Right ventricle myocardium inferior (tissue), 1 donor: ENCODE measurements at regions of chr1 and their contacts with region 1.

Region 1: DNA sequence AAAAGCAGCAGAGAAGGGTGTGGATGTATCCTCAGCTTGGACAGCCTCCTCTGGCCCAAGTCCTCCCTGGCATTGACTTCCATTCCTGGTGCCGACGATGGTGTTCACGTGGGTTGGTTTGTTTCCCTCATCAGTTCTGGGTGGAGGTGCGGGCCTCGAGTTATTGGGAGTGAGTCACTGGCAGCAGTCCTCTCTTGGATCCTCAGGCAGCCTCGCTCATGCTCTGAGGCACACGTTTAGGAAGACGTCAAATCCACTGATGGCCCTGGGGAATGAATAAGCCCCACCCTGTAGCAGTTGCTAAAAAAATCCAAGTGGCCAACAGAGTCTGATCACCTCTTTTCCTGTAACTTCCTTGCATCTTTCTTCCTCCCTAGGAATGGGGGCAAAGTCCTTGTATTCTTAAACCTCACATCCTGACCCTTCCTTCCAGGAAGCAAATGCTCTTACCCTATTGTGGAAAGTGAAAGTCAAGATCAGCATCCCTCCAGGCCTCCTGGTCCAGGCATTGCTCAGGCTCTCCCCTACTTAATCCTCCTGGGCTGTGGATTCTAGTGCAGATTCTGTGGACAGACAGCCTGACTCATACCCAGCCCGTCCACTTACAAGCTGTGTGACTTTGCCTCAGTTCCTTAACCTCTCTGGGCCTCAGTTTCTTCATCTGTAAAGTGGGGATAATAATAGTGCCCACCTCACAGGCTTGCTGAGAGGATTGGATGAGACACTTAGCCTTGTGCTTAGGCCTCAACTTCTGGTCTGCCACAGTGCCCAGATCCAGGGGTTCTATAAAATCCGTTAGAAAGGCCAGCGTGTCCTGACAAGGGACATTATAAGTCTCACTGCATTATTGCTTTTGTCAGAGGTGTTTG is 111.1 kb downstream of the TLR5 start:
- DNase-seq: no peak
- ATAC-seq: peak; percentile 93

Region 2: DNA sequence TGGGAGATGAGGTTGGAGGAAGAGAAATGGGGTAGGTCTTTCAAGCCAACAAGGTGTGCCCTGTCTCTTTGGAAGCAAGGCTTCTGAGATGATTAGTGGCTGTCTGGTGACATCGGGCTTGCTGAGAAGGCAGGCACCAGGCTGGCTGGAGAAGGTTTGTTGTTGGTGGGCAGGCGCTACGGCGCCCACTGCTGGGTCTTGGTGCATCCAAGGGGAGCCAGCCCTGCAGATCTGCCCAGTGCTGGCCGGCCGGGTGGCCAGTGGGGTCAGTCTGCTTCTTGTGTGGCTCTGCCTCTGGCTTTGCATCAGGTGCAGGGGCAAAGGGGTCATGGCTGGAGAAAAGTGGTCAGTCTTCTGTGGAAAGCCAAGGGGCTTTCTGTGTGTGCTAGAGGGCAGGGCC is 15.1 kb before region 1 on chr1:
- intact Hi-C with region 1: no loop called
- DNase-seq: no peak
- ATAC-seq: no peak

Region 3: GRCh38 chr1:223068900-223069665 is 37.1 kb after region 1 on chr1:
- intact Hi-C with region 1: loop called (anchors 5 kb)
- DNase-seq: no peak
- ATAC-seq: no peak